HepG2 (cell line): ENCODE measurements at regions of chr10 and their contacts with region 1.

Region 1: DNA sequence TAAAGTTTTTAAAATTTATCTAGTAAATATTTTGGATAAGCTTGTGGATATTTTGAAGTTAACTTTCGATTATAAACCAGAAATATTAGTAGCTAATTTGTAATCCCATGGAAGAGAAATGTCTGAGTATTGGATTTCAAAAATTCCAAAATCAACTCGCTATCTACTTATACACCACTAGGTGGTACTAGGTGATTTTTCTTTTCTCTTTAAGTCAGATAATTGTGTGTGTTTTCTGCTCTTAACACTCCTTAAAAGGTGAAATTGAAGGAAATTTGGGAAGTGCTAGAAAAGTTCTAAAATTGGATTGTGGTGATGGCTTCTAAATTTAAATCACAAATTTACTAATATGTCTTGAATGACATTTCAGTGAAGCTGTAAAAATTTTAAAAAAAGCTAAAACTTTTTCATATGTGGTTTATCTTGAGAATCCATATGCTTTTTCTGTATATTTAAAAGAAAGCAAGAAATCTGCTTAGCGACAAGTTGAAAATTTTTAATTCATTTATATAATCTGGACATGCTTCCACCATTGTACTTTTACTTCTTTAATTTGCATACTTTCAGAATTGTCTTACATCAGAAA is 90.2 kb downstream of the IPMK start:
- DNase-seq: peak; percentile 15
- ATAC-seq: no peak
- H3K4me3 ChIP-seq: no peak overlapping the region
- H3K27ac ChIP-seq: no peak overlapping the region
- H3K4me1 ChIP-seq: no peaks in the 10 kb centered on the region
- H3K27me3 ChIP-seq: no peaks in the 10 kb centered on the region; a peak in 1 of 5 replicates
- CTCF ChIP-seq: peak; percentile 64
- EP300 ChIP-seq: no peak
- POLR2A ChIP-seq: no peak
- RAD21 ChIP-seq: peak; percentile 52

Region 2: DNA sequence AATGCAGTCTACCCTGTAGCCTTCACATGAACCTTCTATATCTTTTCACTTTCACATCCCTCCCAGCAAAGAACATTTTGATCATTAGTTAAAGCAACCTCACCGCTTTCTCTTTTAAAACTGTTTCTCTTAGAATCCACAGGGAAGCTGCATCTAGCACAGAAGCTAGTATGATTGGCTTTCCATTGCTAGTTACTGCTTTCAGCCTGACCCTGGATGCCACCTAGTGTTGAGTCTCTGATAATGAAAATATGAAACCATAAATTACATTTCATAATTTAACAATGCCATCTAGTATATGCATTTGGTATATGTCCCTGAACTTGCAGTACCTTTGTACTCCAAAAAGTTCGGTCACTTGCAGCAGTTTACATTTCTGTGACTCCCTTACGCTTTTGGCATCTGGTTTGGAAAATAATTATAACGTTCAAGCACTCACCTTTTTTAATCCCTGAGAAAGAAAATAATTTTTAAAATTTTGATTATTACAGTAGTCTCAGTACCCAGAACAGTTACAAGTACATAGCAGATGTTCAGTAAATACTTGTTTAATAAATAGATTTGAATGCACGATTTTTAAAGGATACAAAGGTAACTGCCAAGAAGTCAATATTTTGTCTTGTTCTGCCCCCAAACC is 114.2 kb after region 1 on chr10:
- CTCF ChIA-PET with region 1: interaction called, 56 read pairs
- POLR2A ChIA-PET with region 1: interaction called, 4 read pairs
- in situ Hi-C with region 1: loop called (anchors 5 kb)
- intact Hi-C with region 1: loop called (anchors 1 kb)
- DNase-seq: peak; percentile 21
- ATAC-seq: peak; percentile 80
- H3K4me3 ChIP-seq: no peak overlapping the region
- H3K27ac ChIP-seq: no peak overlapping the region
- H3K4me1 ChIP-seq: no peaks in the 10 kb centered on the region
- H3K27me3 ChIP-seq: no peaks in the 10 kb centered on the region; a peak in 1 of 5 replicates
- CTCF ChIP-seq: peak; percentile 75
- EP300 ChIP-seq: no peak
- POLR2A ChIP-seq: no peak
- RAD21 ChIP-seq: peak; percentile 70